Psoas muscle (tissue), 8 donors: ENCODE measurements at regions of chr2 and their contacts with region 1.

Region 1: GRCh38 chr2:224520064-224520463 is 65.1 kb downstream of the CUL3 start:
- DNase-seq: no peak
- ATAC-seq: peak in 1 of 4 donors; percentile 33
- H3K4me3 ChIP-seq: no peak overlapping the region
- H3K27ac ChIP-seq: no peak overlapping the region
- H3K4me1 ChIP-seq: peaks cover 49% of the 10 kb centered on the region
- H3K27me3 ChIP-seq: no peaks in the 10 kb centered on the region
- CTCF ChIP-seq: no peak

Region 2: GRCh38 chr2:223989273-223990232 is 530.5 kb before region 1 on chr2:
- intact Hi-C with region 1: no loop called
- DNase-seq: no peak
- ATAC-seq: peak in 3 of 4 donors; percentile 20 to 64 (median 62)
- H3K4me3 ChIP-seq: peak overlapping the region; percentile 10
- H3K27ac ChIP-seq: peak overlapping the region; percentile 39
- H3K4me1 ChIP-seq: no peaks in the 10 kb centered on the region
- H3K27me3 ChIP-seq: no peaks in the 10 kb centered on the region
- CTCF ChIP-seq: no peak

Region 3: GRCh38 chr2:224545884-224546644 is 26.0 kb after region 1 on chr2:
- intact Hi-C with region 1: loop called in 1 of 2 experiments (anchors 1 kb)
- DNase-seq: no peak
- ATAC-seq: peak in 3 of 4 donors; percentile 59 to 67 (median 63)
- H3K4me3 ChIP-seq: peak overlapping the region; percentile 29
- H3K27ac ChIP-seq: peak overlapping the region; percentile 50
- H3K4me1 ChIP-seq: peaks cover 32% of the 10 kb centered on the region
- H3K27me3 ChIP-seq: no peaks in the 10 kb centered on the region
- CTCF ChIP-seq: no peak

Region 4: GRCh38 chr2:224576088-224576715 is 56.1 kb after region 1 on chr2:
- intact Hi-C with region 1: loop called in 1 of 2 experiments (anchors 10 kb)
- DNase-seq: no peak
- ATAC-seq: no peak
- H3K4me3 ChIP-seq: no peak overlapping the region
- H3K27ac ChIP-seq: no peak overlapping the region
- H3K4me1 ChIP-seq: peaks cover 91% of the 10 kb centered on the region
- H3K27me3 ChIP-seq: no peaks in the 10 kb centered on the region
- CTCF ChIP-seq: no peak